Activated CD4-positive, alpha-beta memory T cell treated with anti-CD3 and anti-CD28 coated beads, Interleukin-2, amount 10 ng/mL, durations not matched to agents 7 days and 5 days (primary cell): ENCODE measurements at regions of chr15 and their contacts with region 1.

Region 1: GRCh38 chr15:45037936-45038335 is 14.9 kb downstream of the SORD start:
- DNase-seq: no peak
- H3K4me3 Mint-ChIP-seq: no peak overlapping the region
- H3K27ac Mint-ChIP-seq: no peak overlapping the region
- H3K4me1 Mint-ChIP-seq: peaks cover 21% of the 10 kb centered on the region
- H3K27me3 Mint-ChIP-seq: no peaks in the 10 kb centered on the region

Region 2: GRCh38 chr15:45022871-45023658 is 14.9 kb before region 1 on chr15 and contains the start of gene SORD:
- CTCF ChIA-PET with region 1: interaction called, 11 read pairs
- POLR2A ChIA-PET with region 1: no interaction called
- DNase-seq: peak; percentile 93
- H3K4me3 Mint-ChIP-seq: peak within 1 kb of the TSS; percentile 79
- H3K27ac Mint-ChIP-seq: no peak within 1 kb of the TSS
- H3K4me1 Mint-ChIP-seq: peaks cover 10% of the 10 kb centered on the region
- H3K27me3 Mint-ChIP-seq: peaks cover 25% of the 10 kb centered on the region
- total RNA-seq, gene SORD: 5.2 to 5.9 TPM